ENCODE measurements at regions of chr9 and their contacts with region 1.

Region 1: DNA sequence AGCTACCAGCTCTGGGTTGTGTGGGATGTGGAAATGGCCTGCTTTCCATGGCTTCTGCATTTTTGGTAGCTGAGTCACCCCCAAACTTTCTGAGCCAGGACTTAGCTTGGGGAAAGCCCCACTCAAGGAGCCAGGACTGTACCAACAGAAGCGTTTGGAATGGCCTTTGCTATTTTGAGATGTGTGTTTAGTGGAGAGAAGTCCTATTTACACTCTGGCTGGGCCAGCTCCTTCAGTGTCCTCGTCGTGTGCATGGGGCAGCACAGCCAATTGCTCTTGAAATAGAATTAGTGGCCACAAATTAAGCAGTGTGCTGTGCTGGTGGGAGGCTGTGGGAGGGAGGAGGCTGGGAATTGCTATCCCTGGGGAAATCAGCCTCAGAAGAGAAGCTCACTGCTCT is 51.6 kb downstream of the ENTREP1 start:
- DNase-seq: peak; percentile 54 to 77 (median 65)
- H3K4me3 ChIP-seq: no peak overlapping the region
- H3K27ac ChIP-seq: no peak overlapping the region
- H3K4me1 ChIP-seq: peaks cover 26% of the 10 kb centered on the region
- H3K27me3 ChIP-seq: no peaks in the 10 kb centered on the region
- CTCF ChIP-seq: no peak
- EP300 ChIP-seq: no peak
- POLR2A ChIP-seq: no peak

Region 2: GRCh38 chr9:69346998-69347397 is 29.7 kb before region 1 on chr9:
- intact Hi-C with region 1: loop called in 1 of 4 experiments (anchors 2 kb)
- DNase-seq: no peak
- H3K4me3 ChIP-seq: no peak overlapping the region
- H3K27ac ChIP-seq: no peak overlapping the region
- H3K4me1 ChIP-seq: peaks cover 5% of the 10 kb centered on the region
- H3K27me3 ChIP-seq: no peaks in the 10 kb centered on the region
- CTCF ChIP-seq: no peak
- EP300 ChIP-seq: no peak
- POLR2A ChIP-seq: no peak

Measured in ovary (tissue), 10 donors.